ENCODE measurements at regions of chrX and their contacts with region 1.

Region 1: GRCh38 chrX:40792433-40792832 is 57.1 kb upstream of the MED14 start:
- DNase-seq: no peak
- ATAC-seq: no peak
- H3K4me3 ChIP-seq: no peak overlapping the region
- H3K27ac ChIP-seq: no peak overlapping the region
- H3K4me1 ChIP-seq: peaks cover 0 to 13% (median 0%) of the 10 kb centered on the region in 9 donors
- H3K27me3 ChIP-seq: peaks cover 0 to 73% (median 0%) of the 10 kb centered on the region in 7 donors
- CTCF ChIP-seq: no peak

Region 2: GRCh38 chrX:40539214-40540142 is 253.0 kb before region 1 on chrX:
- intact Hi-C with region 1: loop called in 2 of 10 experiments (anchors 5 to 10 kb)
- DNase-seq: peak; percentile 18 to 19
- ATAC-seq: peak; percentile 69 to 93 (median 72)
- H3K4me3 ChIP-seq: peak overlapping the region in 1 of 10 donors; percentile 20
- H3K27ac ChIP-seq: peak overlapping the region in 4 of 10 donors; percentile 31 to 67 (median 37)
- H3K4me1 ChIP-seq: peaks cover 0 to 19% (median 0%) of the 10 kb centered on the region in 9 donors
- H3K27me3 ChIP-seq: peaks cover 0 to 95% (median 0%) of the 10 kb centered on the region in 7 donors
- CTCF ChIP-seq: peak in 1 of 9 donors; percentile 29

Region 3: GRCh38 chrX:40647307-40648197 is 144.9 kb before region 1 on chrX and contains the start of gene CXorf38:
- intact Hi-C with region 1: loop called in 5 of 10 experiments (anchors 2 to 5 kb)
- DNase-seq: peak; percentile 87 to 92
- ATAC-seq: peak; percentile 77 to 94 (median 88)
- H3K4me3 ChIP-seq: peak within 1 kb of the TSS; percentile 67 to 88 (median 78)
- H3K27ac ChIP-seq: peak within 1 kb of the TSS; percentile 54 to 91 (median 82)
- H3K4me1 ChIP-seq: peaks cover 0 to 46% (median 26%) of the 10 kb centered on the region in 9 donors
- H3K27me3 ChIP-seq: peaks cover 0 to 12% (median 0%) of the 10 kb centered on the region in 7 donors
- CTCF ChIP-seq: no peak
- total RNA-seq, gene CXorf38: 3.4 to 11.9 (median 4.9) TPM

Region 4: DNA sequence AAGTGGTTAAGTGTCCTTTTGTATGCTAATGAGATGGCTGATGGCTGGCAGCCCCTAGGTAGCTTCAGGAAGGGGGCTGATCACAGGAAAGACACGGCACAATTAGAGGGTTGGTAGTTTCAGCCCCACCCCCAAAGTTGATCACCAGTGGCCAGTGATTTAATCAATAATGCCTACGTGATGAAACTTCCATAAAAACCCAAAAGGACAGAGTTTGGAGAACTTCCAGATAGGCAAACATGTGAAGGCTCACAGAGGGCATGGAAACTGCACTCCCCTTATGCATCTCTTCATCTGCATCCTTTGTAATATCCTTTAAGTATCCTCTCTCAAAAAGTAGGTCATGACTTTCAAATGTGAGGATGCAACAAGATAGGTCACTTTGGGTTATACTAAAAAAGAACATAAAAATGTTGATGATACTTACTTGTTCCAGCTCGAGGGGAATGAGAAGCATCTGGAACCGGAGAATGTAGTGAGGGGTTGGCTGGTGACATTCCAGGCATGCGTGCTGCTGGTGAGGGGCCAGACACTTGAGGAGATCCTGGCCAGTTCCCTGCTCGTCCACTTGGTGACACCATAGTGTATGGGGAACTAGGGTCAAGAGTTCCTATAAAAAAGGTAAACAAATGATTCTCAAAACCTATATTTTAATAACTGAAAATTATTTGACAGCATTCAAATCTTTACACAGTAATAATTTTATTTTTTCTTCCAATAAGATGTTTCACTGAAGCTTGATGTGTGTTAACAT is 128.4 kb before region 1 on chrX:
- intact Hi-C with region 1: loop called in 4 of 10 experiments (anchors 5 to 10 kb)
- DNase-seq: no peak
- ATAC-seq: peak in 1 of 8 donors; percentile 41
- H3K4me3 ChIP-seq: no peak overlapping the region
- H3K27ac ChIP-seq: no peak overlapping the region
- H3K4me1 ChIP-seq: no peaks in the 10 kb centered on the region
- H3K27me3 ChIP-seq: peaks cover 0 to 52% (median 0%) of the 10 kb centered on the region in 7 donors
- CTCF ChIP-seq: peak in 6 of 9 donors; percentile 27 to 47 (median 38)

Region 5: GRCh38 chrX:40685362-40685918 is 107.0 kb before region 1 on chrX:
- intact Hi-C with region 1: loop called in 1 of 10 experiments (anchors 10 kb)
- DNase-seq: no peak
- ATAC-seq: no peak
- H3K4me3 ChIP-seq: no peak overlapping the region
- H3K27ac ChIP-seq: no peak overlapping the region
- H3K4me1 ChIP-seq: peaks cover 0 to 20% (median 0%) of the 10 kb centered on the region in 9 donors
- H3K27me3 ChIP-seq: peaks cover 0 to 63% (median 0%) of the 10 kb centered on the region in 7 donors
- CTCF ChIP-seq: no peak

Region 6: GRCh38 chrX:40908857-40909475 is 116.5 kb after region 1 on chrX:
- intact Hi-C with region 1: no loop called
- DNase-seq: no peak
- ATAC-seq: no peak
- H3K4me3 ChIP-seq: no peak overlapping the region
- H3K27ac ChIP-seq: no peak overlapping the region
- H3K4me1 ChIP-seq: no peaks in the 10 kb centered on the region
- H3K27me3 ChIP-seq: peaks cover 0 to 24% (median 0%) of the 10 kb centered on the region in 7 donors
- CTCF ChIP-seq: no peak

Measured in heart right ventricle (tissue), 16 donors.